HepG2 (cell line): ENCODE measurements at regions of chr9 and their contacts with region 1.

Region 1: GRCh38 chr9:137086531-137087408 is at the start of gene MAN1B1:
- DNase-seq: peak; percentile 97
- ATAC-seq: peak; percentile 87
- H3K4me3 ChIP-seq: peak within 1 kb of the TSS; percentile 77 to 89 (median 79)
- H3K27ac ChIP-seq: peak within 1 kb of the TSS; percentile 83
- H3K4me1 ChIP-seq: peaks cover 59% of the 10 kb centered on the region
- H3K27me3 ChIP-seq: no peaks in the 10 kb centered on the region; a peak in 1 of 5 replicates
- CTCF ChIP-seq: peak; percentile 45
- EP300 ChIP-seq: no peak
- POLR2A ChIP-seq: peak in 1 of 2 experiments; percentile 65; a peak in 2 of 4 replicates
- RAD21 ChIP-seq: peak; percentile 53; the same call in 1 of the 2 replicates
- total RNA-seq, gene MAN1B1: 19.0 and 48.9 TPM in 2 replicates

Region 2: GRCh38 chr9:136928591-136928990 is 158.2 kb before region 1 on chr9:
- CTCF ChIA-PET with region 1: no interaction called
- POLR2A ChIA-PET with region 1: no interaction called
- in situ Hi-C with region 1: no loop called
- intact Hi-C with region 1: no loop called
- DNase-seq: no peak
- ATAC-seq: no peak
- H3K4me3 ChIP-seq: no peak overlapping the region
- H3K27ac ChIP-seq: no peak overlapping the region
- H3K4me1 ChIP-seq: peaks cover 7% of the 10 kb centered on the region
- H3K27me3 ChIP-seq: no peaks in the 10 kb centered on the region
- CTCF ChIP-seq: no peak
- EP300 ChIP-seq: no peak
- POLR2A ChIP-seq: no peak
- RAD21 ChIP-seq: no peak

Region 3: GRCh38 chr9:137055385-137056364 is 31.1 kb before region 1 on chr9:
- CTCF ChIA-PET with region 1: no interaction called
- POLR2A ChIA-PET with region 1: interaction called, 34 read pairs
- in situ Hi-C with region 1: no loop called
- intact Hi-C with region 1: no loop called
- DNase-seq: peak; percentile 86
- ATAC-seq: peak; percentile 79
- H3K4me3 ChIP-seq: peak overlapping the region; percentile 64 to 84 (median 70)
- H3K27ac ChIP-seq: peak overlapping the region; percentile 96
- H3K4me1 ChIP-seq: peaks cover 57% of the 10 kb centered on the region
- H3K27me3 ChIP-seq: no peaks in the 10 kb centered on the region; a peak in 2 of 5 replicates
- CTCF ChIP-seq: peak; percentile 29
- EP300 ChIP-seq: peak in 1 of 2 experiments; percentile 47; a peak in 1 of 4 replicates
- POLR2A ChIP-seq: no peak
- RAD21 ChIP-seq: no peak